PC-3 (cell line): ENCODE measurements at regions of chr4 and their contacts with region 1.

Region 1: GRCh38 chr4:76949276-76950051 is at the start of gene SEPTIN11:
- DNase-seq: peak; percentile 84
- ATAC-seq: peak; percentile 65
- H3K4me3 ChIP-seq: peak within 1 kb of the TSS; percentile 86
- H3K27ac ChIP-seq: peak within 1 kb of the TSS; percentile 60
- H3K4me1 ChIP-seq: peaks cover 19% of the 10 kb centered on the region
- H3K27me3 ChIP-seq: no peaks in the 10 kb centered on the region
- CTCF ChIP-seq: no peak
- total RNA-seq, gene SEPTIN11: 39.0 and 46.0 TPM in 2 replicates

Region 2: DNA sequence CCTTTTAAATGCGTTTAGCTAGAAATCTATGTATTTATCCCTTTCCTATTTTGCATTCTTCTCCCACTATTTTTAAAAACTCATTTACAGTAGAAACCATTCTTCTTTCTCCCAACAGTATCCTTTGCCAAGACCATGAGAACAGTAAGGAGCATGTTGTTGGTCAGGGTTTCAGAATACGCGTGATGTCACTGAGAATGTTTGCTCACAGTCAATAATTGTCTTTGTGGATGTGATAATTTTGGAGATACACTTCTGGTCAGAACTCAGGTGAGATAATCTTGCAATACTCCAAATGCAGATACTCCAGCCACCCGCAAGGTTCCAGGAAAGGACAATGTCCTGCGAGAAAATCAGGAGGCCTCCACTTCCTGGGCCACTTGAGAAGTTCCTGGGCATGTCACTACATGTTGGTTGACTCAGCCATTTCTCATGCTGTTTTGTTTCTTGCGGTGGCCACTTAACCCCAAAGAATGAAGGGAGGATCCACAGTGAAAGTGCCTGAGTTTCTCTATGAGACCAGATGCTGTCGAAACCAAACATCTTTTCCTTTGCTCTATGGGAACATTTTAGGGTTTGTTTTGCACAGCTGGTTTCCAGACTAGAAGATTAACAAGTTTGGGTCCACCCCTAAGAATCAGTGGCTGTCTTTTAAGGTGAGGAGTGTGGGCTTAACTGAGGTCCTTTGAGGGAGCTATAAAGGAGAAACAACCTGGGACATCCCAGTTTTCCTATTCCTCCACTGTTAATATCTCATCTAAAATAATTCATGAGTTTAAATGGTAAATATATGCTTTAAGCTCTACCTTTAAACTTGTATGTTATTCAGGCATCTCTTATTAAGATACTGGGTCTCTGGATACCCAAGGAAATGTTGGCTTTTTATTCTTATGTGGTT is 167.5 kb before region 1 on chr4:
- CTCF ChIA-PET with region 1: no interaction called
- POLR2A ChIA-PET with region 1: no interaction called
- intact Hi-C with region 1: loop called (anchors 10 kb)
- DNase-seq: peak; percentile 88
- ATAC-seq: peak; percentile 90
- H3K4me3 ChIP-seq: peak overlapping the region; percentile 26; the same call in 1 of the 2 replicates
- H3K27ac ChIP-seq: peak overlapping the region; percentile 92
- H3K4me1 ChIP-seq: peaks cover 31% of the 10 kb centered on the region
- H3K27me3 ChIP-seq: no peaks in the 10 kb centered on the region
- CTCF ChIP-seq: no peak

Region 3: DNA sequence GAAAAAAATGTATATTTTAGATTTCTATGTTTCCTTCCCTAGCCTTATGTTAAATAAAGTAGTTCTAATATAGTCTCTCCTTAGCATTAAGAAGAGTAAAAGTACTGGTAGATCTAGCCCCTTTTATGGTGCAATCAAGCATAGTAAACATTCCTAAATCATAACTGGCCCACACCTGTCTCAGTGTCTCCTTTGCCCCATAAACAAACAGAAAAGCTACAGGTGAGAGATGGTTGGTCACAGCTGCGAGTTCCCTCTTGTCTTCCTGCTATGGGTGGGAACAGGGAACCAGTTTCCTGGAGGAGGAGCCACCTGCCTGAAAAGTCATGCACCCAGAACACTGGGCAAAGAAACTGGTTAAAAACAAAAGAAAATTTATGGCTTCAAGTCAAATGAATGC is 68.1 kb before region 1 on chr4:
- CTCF ChIA-PET with region 1: no interaction called
- POLR2A ChIA-PET with region 1: no interaction called
- intact Hi-C with region 1: loop called (anchors 2 kb)
- DNase-seq: peak; percentile 66
- ATAC-seq: peak; percentile 50
- H3K4me3 ChIP-seq: no peak overlapping the region; the same call in 1 of the 2 replicates
- H3K27ac ChIP-seq: peak overlapping the region; percentile 39
- H3K4me1 ChIP-seq: peaks cover 16% of the 10 kb centered on the region
- H3K27me3 ChIP-seq: no peaks in the 10 kb centered on the region
- CTCF ChIP-seq: no peak

Region 4: DNA sequence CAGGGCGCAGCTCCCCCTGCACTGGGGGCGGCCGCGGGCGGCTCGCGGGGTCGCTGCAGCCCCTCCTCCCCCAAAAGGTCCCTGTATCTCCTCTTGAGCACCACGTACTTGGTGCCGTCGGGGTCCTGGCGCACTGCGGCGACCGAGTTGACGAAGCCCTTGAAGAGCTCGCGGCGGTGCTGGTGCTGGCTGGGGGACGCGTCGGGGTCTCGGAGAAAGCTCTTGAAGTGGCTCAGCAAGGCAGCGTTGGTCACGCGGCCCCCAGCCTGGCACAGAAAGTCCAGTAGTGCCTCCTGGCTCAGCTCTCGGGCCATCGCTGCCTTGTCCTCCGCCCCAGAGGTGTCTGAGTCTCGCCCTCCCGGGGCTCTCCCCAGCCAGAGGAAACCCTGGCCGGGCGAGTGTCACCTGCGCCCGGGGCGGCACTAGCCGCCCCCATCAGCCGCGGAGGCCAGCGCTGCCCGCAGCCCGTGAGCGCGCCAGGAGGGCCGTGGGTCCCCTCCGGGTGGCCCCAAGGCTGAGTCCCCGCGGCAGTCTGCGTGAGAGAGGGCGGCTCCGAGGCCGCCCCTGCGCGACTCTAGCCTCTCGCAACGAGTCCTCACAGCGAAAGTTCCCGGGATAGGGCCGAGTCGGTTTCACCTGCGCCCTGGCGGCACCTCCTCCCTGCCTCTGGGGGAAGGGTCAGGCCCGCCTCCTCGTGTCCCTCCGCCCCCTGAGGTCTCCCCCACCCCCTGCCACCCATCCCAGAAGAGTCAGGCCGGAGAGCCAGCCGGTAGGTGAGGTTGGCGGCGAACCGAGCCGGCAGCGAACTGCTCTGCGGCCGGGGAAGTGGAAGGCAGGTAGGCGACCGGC is 51.7 kb before region 1 on chr4 and contains the start of gene SOWAHB:
- CTCF ChIA-PET with region 1: no interaction called
- POLR2A ChIA-PET with region 1: no interaction called
- intact Hi-C with region 1: loop called (anchors 2 kb)
- DNase-seq: peak; percentile 84
- ATAC-seq: peak; percentile 82
- H3K4me3 ChIP-seq: peak within 1 kb of the TSS; percentile 83
- H3K27ac ChIP-seq: peak within 1 kb of the TSS; percentile 30; the same call in 1 of the 2 replicates
- H3K4me1 ChIP-seq: peaks cover 21% of the 10 kb centered on the region
- H3K27me3 ChIP-seq: no peaks in the 10 kb centered on the region
- CTCF ChIP-seq: no peak
- total RNA-seq, gene SOWAHB: 4.8 and 6.3 TPM in 2 replicates